Psoas muscle (tissue), 8 donors: ENCODE measurements at regions of chr5 and their contacts with region 1.

Region 1: DNA sequence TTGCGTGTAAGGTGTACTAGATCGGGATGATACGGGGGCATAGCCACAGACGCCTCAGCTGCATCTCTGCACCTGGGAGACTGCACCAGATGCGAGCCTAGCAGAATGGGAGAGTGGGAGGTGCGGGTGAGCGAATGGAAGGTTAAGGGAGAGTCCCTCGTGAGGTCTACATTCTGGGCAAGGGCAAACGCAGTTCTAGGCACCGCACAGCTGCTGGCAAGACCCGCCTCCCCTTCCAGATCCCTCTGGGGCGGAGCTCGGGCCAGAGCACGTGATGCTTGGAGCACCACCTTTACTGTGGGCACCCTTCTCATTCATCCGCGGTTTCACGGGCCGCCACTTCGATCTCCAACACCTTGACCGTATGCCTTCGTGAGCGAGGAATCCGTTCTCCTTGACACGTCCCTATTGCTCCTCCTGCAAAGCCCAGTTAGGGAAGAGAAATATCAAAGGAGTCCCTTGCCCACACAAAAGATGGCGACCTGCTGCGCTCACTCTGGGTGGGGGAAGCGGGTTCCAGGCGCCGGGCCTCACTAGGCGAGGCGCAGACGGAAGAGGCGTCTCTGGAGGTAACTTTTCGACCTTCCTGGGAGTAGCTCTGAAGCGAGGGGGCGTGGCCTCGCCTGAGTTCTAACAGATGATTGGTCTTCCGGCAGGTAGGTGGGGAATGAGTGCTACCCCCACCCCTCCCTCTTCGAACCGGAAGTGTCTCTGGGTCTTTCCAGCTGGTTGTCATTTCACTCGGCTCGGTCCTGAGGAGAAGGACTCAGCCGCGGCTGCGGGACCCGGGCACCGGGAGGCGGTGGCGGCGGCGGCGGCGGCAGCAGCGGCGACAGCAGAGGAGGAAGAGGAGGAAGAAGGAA is at the start of gene CPEB4:
- DNase-seq: peak; percentile 98 to 99
- ATAC-seq: peak; percentile 89 to 94 (median 93)
- H3K4me3 ChIP-seq: peak within 1 kb of the TSS; percentile 86
- H3K27ac ChIP-seq: peak within 1 kb of the TSS; percentile 94
- H3K4me1 ChIP-seq: peaks cover 5% of the 10 kb centered on the region
- H3K27me3 ChIP-seq: no peaks in the 10 kb centered on the region
- CTCF ChIP-seq: no peak
- total RNA-seq, gene CPEB4: 95.0 to 262 (median 225) TPM

Region 2: GRCh38 chr5:173764321-173765029 is 123.4 kb before region 1 on chr5:
- intact Hi-C with region 1: loop called (anchors 1 to 5 kb)
- DNase-seq: peak; percentile 88 to 95
- ATAC-seq: peak; percentile 74 to 81 (median 79)
- H3K4me3 ChIP-seq: no peak overlapping the region
- H3K27ac ChIP-seq: peak overlapping the region; percentile 86
- H3K4me1 ChIP-seq: peaks cover 45% of the 10 kb centered on the region
- H3K27me3 ChIP-seq: no peaks in the 10 kb centered on the region
- CTCF ChIP-seq: no peak

Region 3: GRCh38 chr5:173789031-173789920 is 98.6 kb before region 1 on chr5:
- intact Hi-C with region 1: loop called (anchors 5 kb)
- DNase-seq: peak in 1 of 2 donors; percentile 69
- ATAC-seq: peak; percentile 65 to 85 (median 76)
- H3K4me3 ChIP-seq: no peak overlapping the region
- H3K27ac ChIP-seq: no peak overlapping the region
- H3K4me1 ChIP-seq: no peaks in the 10 kb centered on the region
- H3K27me3 ChIP-seq: no peaks in the 10 kb centered on the region
- CTCF ChIP-seq: no peak

Region 4: DNA sequence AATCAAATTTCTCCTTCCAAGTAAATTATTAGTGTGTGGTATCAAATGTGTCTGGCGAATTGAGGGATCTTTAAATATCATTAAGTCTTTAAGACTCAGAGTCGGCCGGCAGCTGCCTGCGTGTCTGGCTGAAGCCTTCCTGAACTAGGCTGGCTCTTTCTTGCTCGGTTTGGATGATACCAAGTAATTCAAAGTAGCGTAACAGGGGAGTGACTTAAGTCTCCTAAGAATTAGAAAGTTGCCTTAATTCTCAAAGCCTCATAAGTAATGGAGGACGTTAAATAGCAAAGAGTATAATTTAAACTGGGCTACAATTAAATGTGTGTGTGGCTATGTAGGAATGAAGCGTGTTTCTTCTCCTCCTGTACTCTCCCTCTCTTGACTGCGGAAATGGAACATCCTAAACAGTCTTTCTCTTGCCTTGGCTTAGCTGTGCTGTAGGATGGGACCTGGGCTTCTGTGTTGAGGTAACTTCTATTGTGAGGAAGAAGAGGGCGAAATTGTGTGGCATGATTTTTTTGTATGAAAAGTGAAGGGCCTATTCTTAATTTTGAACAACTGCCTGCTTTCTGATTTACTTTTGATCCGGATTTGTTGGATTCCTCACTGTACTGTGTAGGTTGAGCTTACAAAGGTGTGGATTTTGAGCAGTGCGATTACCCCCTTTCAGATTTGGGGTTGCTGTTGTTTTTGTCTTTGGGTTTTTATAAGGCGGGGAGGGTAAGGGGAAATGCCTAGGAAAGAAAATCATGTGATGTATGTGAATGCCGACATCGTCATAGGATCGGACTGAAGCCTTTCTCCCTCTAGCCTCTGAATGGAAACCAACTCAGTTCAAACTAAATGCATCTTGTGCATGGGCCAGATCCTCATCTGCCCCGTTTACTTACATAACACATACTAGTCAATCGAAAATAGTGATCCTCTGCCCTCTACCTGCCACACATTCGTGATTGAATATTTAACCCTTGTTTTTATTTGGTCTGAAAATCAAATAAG is 30.2 kb after region 1 on chr5:
- intact Hi-C with region 1: loop called in 1 of 2 experiments (anchors 2 kb)
- DNase-seq: peak; percentile 35 to 66
- ATAC-seq: peak; percentile 78 to 80 (median 79)
- H3K4me3 ChIP-seq: peak overlapping the region; percentile 71
- H3K27ac ChIP-seq: peak overlapping the region; percentile 94
- H3K4me1 ChIP-seq: peaks cover 74% of the 10 kb centered on the region
- H3K27me3 ChIP-seq: no peaks in the 10 kb centered on the region
- CTCF ChIP-seq: no peak

Region 5: DNA sequence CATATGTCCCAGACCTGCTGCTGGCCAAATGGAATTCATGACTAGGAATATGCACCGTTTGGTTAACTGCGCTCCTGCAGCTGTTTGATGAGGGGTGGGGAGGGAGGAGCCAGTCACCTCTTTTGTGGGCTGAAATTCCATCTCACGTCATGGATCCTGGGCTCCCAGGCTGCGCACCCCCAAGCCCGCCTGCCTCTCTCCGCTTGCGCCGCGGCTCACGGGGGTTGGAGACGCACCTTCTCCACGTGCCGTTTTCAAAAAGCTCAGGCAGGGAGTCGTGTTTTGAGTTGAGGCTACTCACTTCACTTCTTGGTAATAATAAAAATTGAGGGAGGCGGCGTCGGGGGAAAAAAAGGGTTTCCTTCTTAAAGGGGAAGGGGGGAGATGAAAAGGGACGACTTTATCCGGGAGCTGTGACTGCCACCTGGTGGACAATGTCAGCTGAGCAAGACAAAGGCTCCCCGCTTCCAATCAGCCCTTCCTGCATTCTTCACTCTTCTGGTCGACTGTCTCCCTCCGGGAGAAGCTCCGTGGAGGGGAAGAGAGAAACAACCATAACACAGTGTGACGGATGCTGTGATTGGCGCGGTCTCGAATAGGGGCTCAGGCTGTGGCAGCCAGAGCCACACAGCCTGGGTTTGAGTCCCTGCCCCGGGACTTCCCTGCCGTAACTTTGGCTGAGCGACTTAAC is 85.2 kb after region 1 on chr5:
- intact Hi-C with region 1: loop called (anchors 2 to 5 kb)
- DNase-seq: peak; percentile 79 to 88
- ATAC-seq: peak; percentile 73 to 85 (median 82)
- H3K4me3 ChIP-seq: peak overlapping the region; percentile 55
- H3K27ac ChIP-seq: peak overlapping the region; percentile 68
- H3K4me1 ChIP-seq: peaks cover 5% of the 10 kb centered on the region
- H3K27me3 ChIP-seq: no peaks in the 10 kb centered on the region
- CTCF ChIP-seq: peak; percentile 93